ENCODE measurements at regions of chr6 and their contacts with region 1.

Region 1: DNA sequence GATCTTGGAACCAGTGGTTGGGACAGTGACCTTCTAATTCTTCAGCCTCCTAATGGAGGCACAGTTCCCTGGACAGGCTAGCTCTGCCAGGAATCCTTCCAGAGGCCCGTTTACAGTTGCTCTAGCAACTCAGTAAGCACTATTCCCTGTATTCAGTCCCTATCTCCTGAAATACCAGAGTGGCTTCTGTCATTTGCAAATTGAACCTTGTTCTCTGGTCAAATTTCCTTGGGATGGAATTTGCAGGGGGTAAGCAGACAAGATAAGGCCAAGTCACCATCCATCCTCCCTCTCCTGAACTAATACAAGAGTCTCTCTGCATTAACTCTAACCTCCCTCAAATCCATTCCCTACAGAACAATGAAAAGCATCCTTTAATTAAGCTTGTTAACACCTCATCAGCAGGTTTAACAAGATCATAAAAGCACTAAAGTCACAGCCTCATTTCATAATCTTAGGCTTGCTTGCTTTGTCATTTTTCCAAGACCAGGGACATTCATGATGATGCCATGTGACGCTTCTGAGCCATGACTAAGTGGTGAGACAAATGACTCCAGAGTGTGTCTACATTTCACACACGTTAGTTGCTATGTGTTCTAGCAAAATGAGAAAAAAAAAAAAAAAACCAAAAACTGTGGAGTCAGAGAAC is 37.1 kb downstream of the SLC22A23 start:
- DNase-seq: peak; percentile 73
- H3K4me3 Mint-ChIP-seq: no peak overlapping the region
- H3K27ac Mint-ChIP-seq: no peak overlapping the region
- H3K4me1 Mint-ChIP-seq: peaks cover 28% of the 10 kb centered on the region
- H3K27me3 Mint-ChIP-seq: no peaks in the 10 kb centered on the region
- CTCF ChIP-seq: no peak

Region 2: DNA sequence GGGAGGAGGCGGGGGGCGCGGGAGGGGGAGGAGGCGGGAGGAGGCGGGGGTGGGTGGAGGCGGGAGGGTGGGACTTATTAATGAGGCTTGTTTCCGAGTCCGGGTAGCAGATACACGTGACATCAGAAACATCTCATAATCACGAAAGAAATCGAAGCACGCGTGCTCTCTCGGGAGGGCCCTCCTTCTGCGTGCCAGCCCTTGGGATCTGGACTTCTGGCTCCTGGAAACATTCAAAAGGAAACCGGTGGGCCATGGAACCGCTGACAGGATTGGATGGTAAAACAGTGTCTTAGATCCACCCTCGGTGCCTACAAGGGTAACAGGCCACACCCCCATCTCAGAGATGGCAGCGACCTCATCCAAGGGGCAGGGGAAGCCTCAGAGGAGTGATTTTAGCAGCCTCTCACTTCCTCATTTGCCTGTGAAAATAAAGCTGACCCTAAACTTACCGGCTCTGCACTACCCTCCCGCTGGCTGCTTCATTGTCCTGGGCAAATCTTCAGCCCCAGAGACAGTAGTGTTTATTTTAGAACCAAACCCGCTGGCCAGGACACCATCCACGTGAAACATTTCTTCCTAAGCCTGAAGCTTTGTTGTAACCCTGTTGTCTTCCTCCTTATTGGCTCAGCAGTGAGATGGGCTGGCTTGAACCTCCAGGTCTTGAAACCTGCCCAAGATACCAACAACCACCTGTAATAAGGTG is 63.5 kb before region 1 on chr6:
- CTCF ChIA-PET with region 1: no interaction called
- POLR2A ChIA-PET with region 1: no interaction called
- intact Hi-C with region 1: no loop called
- DNase-seq: peak; percentile 17
- H3K4me3 Mint-ChIP-seq: peak overlapping the region; percentile 6
- H3K27ac Mint-ChIP-seq: no peak overlapping the region
- H3K4me1 Mint-ChIP-seq: peaks cover 11% of the 10 kb centered on the region
- H3K27me3 Mint-ChIP-seq: no peaks in the 10 kb centered on the region
- CTCF ChIP-seq: no peak

Region 3: DNA sequence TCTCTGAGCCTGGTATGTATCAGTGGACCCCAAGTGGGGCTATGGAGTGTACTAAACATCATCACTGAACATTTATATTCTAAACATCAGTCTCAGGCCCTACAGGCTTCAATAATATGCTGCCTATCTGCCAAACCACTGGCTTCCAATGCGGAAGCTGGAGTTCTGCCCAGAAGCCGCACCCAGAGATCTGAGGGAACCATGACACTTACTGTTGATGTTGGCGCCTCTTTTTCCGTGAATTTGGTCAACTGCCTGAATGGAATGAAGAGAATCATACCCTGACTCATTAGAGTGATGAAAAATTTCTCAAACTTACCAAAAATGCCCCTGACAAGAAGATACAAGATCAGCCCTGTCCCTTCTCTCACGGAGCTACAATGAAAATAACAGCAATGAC is 29.1 kb before region 1 on chr6:
- CTCF ChIA-PET with region 1: no interaction called
- POLR2A ChIA-PET with region 1: interaction called, 10 read pairs
- intact Hi-C with region 1: no loop called
- DNase-seq: peak; percentile 99
- H3K4me3 Mint-ChIP-seq: peak overlapping the region; percentile 49
- H3K27ac Mint-ChIP-seq: no peak overlapping the region
- H3K4me1 Mint-ChIP-seq: peaks cover 7% of the 10 kb centered on the region
- H3K27me3 Mint-ChIP-seq: no peaks in the 10 kb centered on the region
- CTCF ChIP-seq: no peak

Measured in MCF 10A (cell line).